Left cardiac atrium (tissue), 4 donors: ENCODE measurements at regions of chr2 and their contacts with region 1.

Region 1: DNA sequence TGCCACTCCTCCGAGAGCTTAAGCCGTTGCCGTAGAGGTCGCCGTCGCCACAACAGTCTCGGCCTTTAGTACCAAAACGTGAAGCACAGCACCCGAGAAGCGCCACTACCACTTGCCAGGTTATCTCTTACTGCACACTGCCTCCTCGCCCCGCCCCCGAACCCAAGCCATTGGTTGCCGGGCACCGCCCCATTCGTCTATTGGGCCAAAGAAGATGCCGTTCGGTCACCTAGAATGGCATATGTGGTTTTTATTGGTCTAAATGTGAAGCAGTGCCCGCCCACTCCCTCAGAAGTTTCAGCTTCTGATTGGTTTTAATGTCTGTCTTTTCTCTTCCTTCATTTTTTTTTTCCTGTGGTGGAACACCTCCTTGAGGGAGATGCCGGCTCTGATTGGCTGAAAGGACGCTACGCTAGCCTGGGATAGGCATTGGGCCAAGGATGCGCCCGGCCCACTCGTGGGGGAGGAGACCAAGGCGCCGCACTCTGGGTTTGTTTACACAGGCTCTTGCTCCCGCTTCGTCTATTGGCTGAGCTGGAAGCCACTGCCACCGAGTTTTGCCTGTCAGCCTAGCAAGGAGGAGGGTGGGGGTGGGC is at the start of gene PAIP2B:
- DNase-seq: peak; percentile 99
- ATAC-seq: peak; percentile 95 to 99
- total RNA-seq, gene PAIP2B: 15.1 to 20.5 TPM

Region 2: GRCh38 chr2:71276311-71277146 is 49.5 kb after region 1 on chr2:
- intact Hi-C with region 1: loop called (anchors 2 to 10 kb)
- DNase-seq: peak; percentile 94
- ATAC-seq: peak; percentile 98 to 100

Region 3: GRCh38 chr2:71331581-71332434 is 104.7 kb after region 1 on chr2 and contains the start of gene ZNF638:
- intact Hi-C with region 1: loop called in 1 of 2 experiments (anchors 1 kb)
- DNase-seq: peak; percentile 96
- ATAC-seq: peak; percentile 99
- total RNA-seq, gene ZNF638: 68.7 to 72.8 TPM

Region 4: DNA sequence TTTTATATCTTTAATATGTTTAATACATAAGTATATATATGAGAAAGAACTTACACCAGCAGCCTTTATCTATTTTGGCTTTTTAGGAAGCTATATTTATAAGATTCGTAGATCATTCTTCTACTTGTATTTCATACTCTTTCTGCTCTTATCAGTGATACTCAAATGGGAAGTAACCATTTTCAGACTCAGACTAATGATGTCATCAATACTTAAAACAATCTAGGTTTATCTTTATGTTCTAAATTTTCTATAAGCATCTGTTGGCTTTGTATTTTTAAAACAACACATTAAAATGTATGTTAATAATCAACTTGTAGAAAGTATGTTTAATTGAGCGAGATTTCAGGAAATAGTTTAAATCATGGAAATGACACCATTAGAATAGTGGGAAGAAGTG is 175.4 kb after region 1 on chr2:
- intact Hi-C with region 1: no loop called
- DNase-seq: no peak
- ATAC-seq: no peak

Region 5: GRCh38 chr2:71592181-71592711 is 365.2 kb after region 1 on chr2:
- intact Hi-C with region 1: no loop called
- DNase-seq: no peak
- ATAC-seq: peak; percentile 21 to 22